Heart right ventricle (tissue), 16 donors: ENCODE measurements at regions of chr3 and their contacts with region 1.

Region 1: DNA sequence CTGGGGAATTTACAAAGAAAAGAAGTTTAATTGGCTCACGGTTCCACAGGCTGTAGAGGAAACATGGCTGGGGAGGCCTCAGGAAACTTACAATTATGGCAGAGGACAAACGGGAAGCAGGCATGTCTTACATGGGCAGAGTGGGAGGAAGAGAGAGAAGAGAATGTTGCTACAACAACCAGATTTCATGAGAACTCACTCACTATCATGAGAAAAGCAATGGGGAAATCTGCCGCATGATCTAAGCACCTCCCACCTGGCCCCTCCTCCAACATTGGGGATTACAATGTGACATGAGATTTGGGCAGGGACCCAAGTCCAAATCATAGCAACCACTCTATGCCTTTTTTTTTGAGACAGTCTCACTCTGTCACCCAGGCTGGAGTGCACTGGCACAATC is 28.8 kb downstream of the PCNP start:
- DNase-seq: no peak
- ATAC-seq: no peak
- H3K4me3 ChIP-seq: no peak overlapping the region
- H3K27ac ChIP-seq: no peak overlapping the region
- H3K4me1 ChIP-seq: no peaks in the 10 kb centered on the region
- H3K27me3 ChIP-seq: no peaks in the 10 kb centered on the region
- CTCF ChIP-seq: no peak

Region 2: GRCh38 chr3:101656651-101657050 is 53.9 kb after region 1 on chr3:
- intact Hi-C with region 1: loop called in 1 of 10 experiments (anchors 2 kb)
- DNase-seq: no peak
- ATAC-seq: no peak
- H3K4me3 ChIP-seq: no peak overlapping the region
- H3K27ac ChIP-seq: no peak overlapping the region
- H3K4me1 ChIP-seq: peaks cover 0 to 7% (median 0%) of the 10 kb centered on the region in 9 donors
- H3K27me3 ChIP-seq: no peaks in the 10 kb centered on the region
- CTCF ChIP-seq: no peak